T-cell (primary cell): ENCODE measurements at regions of chr17 and their contacts with region 1.

Region 1: DNA sequence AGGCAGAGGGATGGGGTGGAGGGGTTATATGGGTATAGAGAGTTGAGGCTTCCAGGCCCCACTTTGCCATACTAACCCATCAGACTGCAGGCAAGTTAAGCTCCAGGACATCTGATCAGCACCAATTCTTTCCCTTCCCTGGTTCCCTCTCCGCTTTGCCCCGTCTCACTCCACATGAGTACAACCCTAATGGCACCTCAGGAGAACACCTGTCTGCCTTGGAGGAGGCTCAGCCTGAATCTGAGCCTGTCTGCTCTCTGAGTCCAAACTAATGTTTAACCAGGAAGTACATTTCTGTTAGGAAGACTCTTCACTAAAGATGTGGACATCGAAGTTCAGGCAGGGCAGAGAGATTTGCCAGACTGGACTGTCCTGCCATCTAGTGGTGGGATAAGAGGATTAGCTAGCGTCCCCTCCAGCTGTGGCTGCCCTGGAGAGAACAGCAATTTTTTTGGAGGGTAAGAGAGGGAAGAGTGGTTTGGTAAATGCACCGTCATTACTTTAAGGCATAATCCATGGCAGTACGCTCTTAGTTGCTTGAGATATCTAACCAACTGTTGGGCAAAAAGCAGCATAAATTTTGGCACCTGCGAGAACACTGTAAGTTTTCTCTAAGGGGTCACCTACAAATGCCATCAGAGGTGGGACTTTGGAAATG is 29.2 kb upstream of the LRRC75A start:
- DNase-seq: peak; percentile 12 to 84 (median 46)
- ATAC-seq: peak; percentile 84 to 96 (median 90)
- H3K4me3 ChIP-seq: no peak overlapping the region
- H3K4me3 Mint-ChIP-seq: no peak overlapping the region
- H3K27ac ChIP-seq: no peak overlapping the region
- H3K27ac Mint-ChIP-seq: no peak overlapping the region
- H3K4me1 ChIP-seq: peaks cover 0 to 6% of the 10 kb centered on the region in 2 experiments
- H3K4me1 Mint-ChIP-seq: peaks cover 2 to 6% (median 3%) of the 10 kb centered on the region in 3 donors
- H3K27me3 ChIP-seq: peaks cover 0 to 37% of the 10 kb centered on the region in 2 experiments
- H3K27me3 Mint-ChIP-seq: peaks cover 20 to 34% of the 10 kb centered on the region in 2 donors

Region 2: GRCh38 chr17:16407911-16408588 is 113.1 kb before region 1 on chr17:
- CTCF ChIA-PET with region 1: no interaction called
- POLR2A ChIA-PET with region 1: no interaction called
- DNase-seq: no peak
- ATAC-seq: no peak
- H3K4me3 ChIP-seq: no peak overlapping the region
- H3K4me3 Mint-ChIP-seq: peak overlapping the region; percentile 21 to 64 (median 35)
- H3K27ac ChIP-seq: no peak overlapping the region
- H3K27ac Mint-ChIP-seq: no peak overlapping the region
- H3K4me1 ChIP-seq: peaks cover 0 to 12% of the 10 kb centered on the region in 2 experiments
- H3K4me1 Mint-ChIP-seq: peaks cover 3 to 13% (median 8%) of the 10 kb centered on the region in 3 donors
- H3K27me3 ChIP-seq: peaks cover 0 to 41% of the 10 kb centered on the region in 2 experiments
- H3K27me3 Mint-ChIP-seq: peaks cover 4 to 13% of the 10 kb centered on the region in 2 donors

Region 3: DNA sequence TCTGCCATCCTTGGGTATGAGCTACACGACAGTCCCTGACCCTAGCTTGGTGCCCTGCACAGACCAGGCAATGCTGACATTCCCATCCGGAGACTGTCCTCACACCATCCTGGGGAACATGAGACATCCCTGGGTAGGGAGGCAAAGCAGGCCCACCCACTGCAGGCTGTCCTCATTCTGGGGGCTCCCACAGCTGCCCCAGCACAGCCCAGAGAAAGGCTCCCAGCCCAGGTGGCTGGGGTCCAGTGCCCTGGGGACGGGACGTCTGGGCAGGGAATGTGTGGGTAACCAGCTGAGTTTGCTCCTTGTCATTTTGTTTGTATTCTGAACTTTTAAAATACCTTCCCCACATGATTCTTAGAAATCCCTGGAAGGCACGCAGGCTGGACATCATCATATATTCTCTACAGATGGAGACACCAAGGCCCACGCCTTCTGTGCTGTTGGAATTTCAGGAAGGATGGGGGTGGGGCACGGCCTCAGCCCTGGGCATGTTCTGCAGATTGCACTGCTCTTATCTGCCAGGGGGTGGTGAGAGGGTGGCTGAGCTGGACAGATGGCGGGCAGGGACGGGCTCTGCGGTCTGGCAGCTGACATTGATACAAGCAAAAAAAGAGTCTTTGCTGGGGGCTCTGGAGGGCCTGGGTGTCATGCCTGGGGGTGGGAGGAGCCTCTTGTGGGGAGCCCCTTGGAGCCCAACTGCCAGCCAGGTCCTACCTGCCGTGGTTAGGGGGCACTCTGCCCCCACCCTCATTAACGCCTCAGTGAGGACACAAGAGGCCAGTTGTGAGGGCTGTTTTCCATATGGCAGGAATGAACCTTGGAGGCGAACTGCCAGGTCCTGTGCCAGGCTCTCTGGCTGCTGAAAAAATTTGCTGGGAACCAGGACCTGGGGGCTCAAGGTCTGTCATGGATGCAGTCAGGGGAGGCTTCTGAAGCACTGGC is 57.6 kb before region 1 on chr17:
- CTCF ChIA-PET with region 1: interaction called in 1 of 2 experiments, 10 read pairs
- POLR2A ChIA-PET with region 1: no interaction called
- DNase-seq: no peak
- ATAC-seq: no peak
- H3K4me3 ChIP-seq: no peak overlapping the region
- H3K4me3 Mint-ChIP-seq: no peak overlapping the region
- H3K27ac ChIP-seq: no peak overlapping the region
- H3K27ac Mint-ChIP-seq: no peak overlapping the region
- H3K4me1 ChIP-seq: no peaks in the 10 kb centered on the region
- H3K4me1 Mint-ChIP-seq: peaks cover 0 to 2% (median 2%) of the 10 kb centered on the region in 3 donors
- H3K27me3 ChIP-seq: no peaks in the 10 kb centered on the region
- H3K27me3 Mint-ChIP-seq: no peaks in the 10 kb centered on the region